IMR-90 (cell line): ENCODE measurements at regions of chr20 and their contacts with region 1.

Region 1: GRCh38 chr20:44310664-44311639 is at the start of gene FITM2:
- DNase-seq: peak; percentile 96
- ATAC-seq: peak; percentile 96
- H3K4me3 ChIP-seq: peak within 1 kb of the TSS; percentile 79
- H3K27ac ChIP-seq: peak within 1 kb of the TSS; percentile 64
- H3K4me1 ChIP-seq: peaks cover 4% of the 10 kb centered on the region
- H3K27me3 ChIP-seq: peaks cover 2% of the 10 kb centered on the region; the same call in 1 of the 2 replicates
- CTCF ChIP-seq: peak; percentile 98
- POLR2A ChIP-seq: 0 out of 2 replicates have a peak, but pooled peaks have one; percentile 26
- RAD21 ChIP-seq: peak; percentile 87
- total RNA-seq, gene FITM2: 6.5 and 7.2 TPM in 2 replicates

Region 2: GRCh38 chr20:44217342-44218092 is 93.4 kb before region 1 on chr20:
- CTCF ChIA-PET with region 1: interaction called, 52 read pairs
- POLR2A ChIA-PET with region 1: no interaction called
- dilution Hi-C with region 1: no loop called
- in situ Hi-C with region 1: loop called (anchors 5 kb)
- intact Hi-C with region 1: loop called (anchors 1 kb)
- DNase-seq: peak; percentile 67
- ATAC-seq: peak; percentile 88
- H3K4me3 ChIP-seq: no peak overlapping the region
- H3K27ac ChIP-seq: no peak overlapping the region
- H3K4me1 ChIP-seq: no peaks in the 10 kb centered on the region
- H3K27me3 ChIP-seq: no peaks in the 10 kb centered on the region
- CTCF ChIP-seq: peak; percentile 88
- POLR2A ChIP-seq: no peak
- RAD21 ChIP-seq: peak; percentile 88